ENCODE measurements at regions of chr14 and their contacts with region 1.

Region 1: GRCh38 chr14:21136024-21136423 is 19.8 kb downstream of the OR5AU1 start:
- DNase-seq: peak; percentile 51
- H3K4me3 ChIP-seq: peak overlapping the region in 1 of 2 experiments; percentile 20; a peak in 1 of 4 replicates
- H3K27ac ChIP-seq: no peak overlapping the region
- H3K4me1 ChIP-seq: no peaks in the 10 kb centered on the region
- H3K27me3 ChIP-seq: peaks cover 6% of the 10 kb centered on the region; the same call in 1 of the 2 replicates
- CTCF ChIP-seq: peak; percentile 77
- EP300 ChIP-seq: no peak
- RAD21 ChIP-seq: peak; percentile 44; the same call in 1 of the 2 replicates

Region 2: GRCh38 chr14:21123429-21123828 is 12.6 kb before region 1 on chr14:
- CTCF ChIA-PET with region 1: interaction called, 24 read pairs
- POLR2A ChIA-PET with region 1: no interaction called
- DNase-seq: no peak
- H3K4me3 ChIP-seq: no peak overlapping the region
- H3K27ac ChIP-seq: no peak overlapping the region
- H3K4me1 ChIP-seq: no peaks in the 10 kb centered on the region
- H3K27me3 ChIP-seq: peaks cover 7% of the 10 kb centered on the region; the same call in 1 of the 2 replicates
- CTCF ChIP-seq: no peak
- EP300 ChIP-seq: no peak
- RAD21 ChIP-seq: no peak

Measured in SK-N-SH (cell line).